CD8-positive, alpha-beta T cell (primary cell): ENCODE measurements at regions of chr6 and their contacts with region 1.

Region 1: DNA sequence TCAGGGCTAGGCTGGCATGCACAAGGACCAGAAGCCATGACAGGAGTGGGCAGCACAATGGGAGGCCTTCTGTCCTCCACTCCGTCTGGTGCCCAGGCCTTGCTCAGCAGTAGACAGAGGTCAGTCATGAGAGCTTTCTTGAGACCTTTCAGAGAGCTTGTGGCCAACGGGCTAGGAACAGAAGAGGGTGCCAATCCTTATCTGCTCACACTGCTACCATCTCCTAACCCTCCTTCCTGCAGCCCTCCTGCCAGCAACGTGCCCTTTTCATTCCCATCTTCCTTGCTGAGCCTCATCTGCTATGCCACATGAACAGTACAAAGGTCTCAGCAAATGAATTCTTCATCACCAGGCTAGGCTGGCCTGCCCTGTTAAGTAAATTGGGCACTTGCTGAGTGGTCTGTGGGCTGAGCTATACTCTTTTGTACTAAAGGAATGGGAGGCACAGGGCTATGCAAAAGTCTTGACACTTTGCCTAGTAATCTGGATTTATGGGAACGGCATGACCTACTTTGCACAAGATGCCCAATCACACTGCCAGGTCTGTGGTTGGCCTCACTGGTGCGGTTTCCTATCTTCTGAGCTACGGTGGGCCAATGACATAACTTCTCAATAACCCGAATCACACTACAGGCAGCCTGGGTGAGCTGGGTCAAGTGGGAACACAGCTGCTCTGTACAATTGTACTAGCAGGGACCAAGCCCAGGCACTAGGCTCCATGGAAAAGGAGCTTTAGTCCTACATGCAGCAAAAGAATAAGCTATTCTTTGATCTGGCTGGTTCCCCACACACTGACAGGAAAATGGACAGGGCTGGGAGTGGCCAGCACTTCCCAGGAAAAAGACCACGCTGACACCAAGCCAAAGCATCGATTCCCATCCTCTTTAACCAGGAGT is 47.8 kb downstream of the ELOVL5 start:
- DNase-seq: peak in 5 of 9 experiments; percentile 29 to 72 (median 44)
- ATAC-seq: peak; percentile 22
- H3K4me3 ChIP-seq: no peak overlapping the region
- H3K4me3 Mint-ChIP-seq: peak overlapping the region; percentile 49
- H3K27ac ChIP-seq: no peak overlapping the region
- H3K27ac Mint-ChIP-seq: peak overlapping the region; percentile 89
- H3K4me1 ChIP-seq: peaks cover 39% of the 10 kb centered on the region
- H3K4me1 Mint-ChIP-seq: peaks cover 77% of the 10 kb centered on the region
- H3K27me3 ChIP-seq: no peaks in the 10 kb centered on the region
- H3K27me3 Mint-ChIP-seq: no peaks in the 10 kb centered on the region
- CTCF ChIP-seq: no peak

Region 2: DNA sequence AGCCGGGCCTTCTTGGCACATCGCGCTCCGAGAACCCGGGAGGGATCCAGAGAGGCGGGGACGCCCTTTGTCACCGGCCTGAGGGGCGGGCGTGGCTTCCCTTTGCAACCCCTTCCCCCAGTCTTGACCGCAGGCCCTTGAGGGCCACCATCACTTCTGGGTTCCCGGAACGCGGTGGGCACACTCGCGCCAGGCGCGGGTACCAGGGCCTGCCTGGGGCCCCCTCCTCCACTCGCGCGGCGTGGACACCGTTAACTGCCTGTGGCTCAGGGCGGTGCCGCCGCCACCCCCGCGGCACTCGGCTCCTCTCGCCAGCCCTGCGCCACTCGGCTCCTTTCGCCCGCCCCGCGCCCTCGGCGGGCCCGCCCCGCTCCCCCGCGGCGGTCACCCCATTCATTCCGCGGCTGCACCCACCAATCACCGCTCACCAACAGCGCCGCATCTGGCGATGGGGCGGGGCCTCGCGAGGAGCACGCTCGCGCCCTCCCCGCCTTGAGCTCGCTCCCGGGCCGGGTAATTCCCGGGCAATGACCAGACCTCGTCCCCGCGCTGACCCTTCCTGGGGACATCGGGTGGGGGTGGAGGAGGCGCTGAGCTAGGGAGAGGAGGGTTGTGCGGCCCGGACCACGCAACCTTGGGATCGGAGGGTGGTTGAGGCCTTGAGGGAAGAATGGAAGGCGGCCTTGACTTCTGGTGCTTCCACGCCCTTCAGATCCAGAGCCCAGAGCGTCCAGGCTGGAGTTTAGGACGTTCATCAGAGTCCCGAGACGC is 58.4 kb after region 1 on chr6:
- CTCF ChIA-PET with region 1: interaction called, 3 read pairs
- POLR2A ChIA-PET with region 1: interaction called, 7 read pairs
- intact Hi-C with region 1: loop called in 1 of 2 experiments (anchors 1 kb)
- DNase-seq: peak; percentile 79 to 95 (median 86)
- ATAC-seq: peak; percentile 76
- H3K4me3 ChIP-seq: peak overlapping the region; percentile 67 to 72
- H3K4me3 Mint-ChIP-seq: peak overlapping the region; percentile 88
- H3K27ac ChIP-seq: peak overlapping the region; percentile 83 to 96
- H3K27ac Mint-ChIP-seq: peak overlapping the region; percentile 96
- H3K4me1 ChIP-seq: peaks cover 38% of the 10 kb centered on the region
- H3K4me1 Mint-ChIP-seq: peaks cover 43% of the 10 kb centered on the region
- H3K27me3 ChIP-seq: no peaks in the 10 kb centered on the region
- H3K27me3 Mint-ChIP-seq: no peaks in the 10 kb centered on the region
- CTCF ChIP-seq: no peak